Endothelial cell of umbilical vein (primary cell): ENCODE measurements at regions of chr12 and their contacts with region 1.

Region 1: GRCh38 chr12:62372137-62372536 is 94.5 kb upstream of the MON2 start:
- DNase-seq: no peak
- H3K4me3 ChIP-seq: no peak overlapping the region
- H3K27ac ChIP-seq: no peak overlapping the region
- H3K4me1 ChIP-seq: peaks cover 8% of the 10 kb centered on the region
- H3K27me3 ChIP-seq: no peaks in the 10 kb centered on the region
- CTCF ChIP-seq: no peak
- POLR2A ChIP-seq: no peak

Region 2: GRCh38 chr12:62259993-62260732 is 112.0 kb before region 1 on chr12 and contains the start of gene USP15:
- CTCF ChIA-PET with region 1: no interaction called
- POLR2A ChIA-PET with region 1: no interaction called
- dilution Hi-C with region 1: no loop called
- intact Hi-C with region 1: loop called (anchors 5 kb)
- DNase-seq: peak; percentile 97
- H3K4me3 ChIP-seq: peak within 1 kb of the TSS; percentile 65 to 97 (median 93)
- H3K27ac ChIP-seq: peak within 1 kb of the TSS; percentile 71
- H3K4me1 ChIP-seq: peaks cover 19% of the 10 kb centered on the region
- H3K27me3 ChIP-seq: no peaks in the 10 kb centered on the region
- CTCF ChIP-seq: peak; percentile 84 to 96
- POLR2A ChIP-seq: peak; percentile 78
- total RNA-seq, gene USP15: 61.8 and 66.2 TPM in 2 replicates

Region 3: DNA sequence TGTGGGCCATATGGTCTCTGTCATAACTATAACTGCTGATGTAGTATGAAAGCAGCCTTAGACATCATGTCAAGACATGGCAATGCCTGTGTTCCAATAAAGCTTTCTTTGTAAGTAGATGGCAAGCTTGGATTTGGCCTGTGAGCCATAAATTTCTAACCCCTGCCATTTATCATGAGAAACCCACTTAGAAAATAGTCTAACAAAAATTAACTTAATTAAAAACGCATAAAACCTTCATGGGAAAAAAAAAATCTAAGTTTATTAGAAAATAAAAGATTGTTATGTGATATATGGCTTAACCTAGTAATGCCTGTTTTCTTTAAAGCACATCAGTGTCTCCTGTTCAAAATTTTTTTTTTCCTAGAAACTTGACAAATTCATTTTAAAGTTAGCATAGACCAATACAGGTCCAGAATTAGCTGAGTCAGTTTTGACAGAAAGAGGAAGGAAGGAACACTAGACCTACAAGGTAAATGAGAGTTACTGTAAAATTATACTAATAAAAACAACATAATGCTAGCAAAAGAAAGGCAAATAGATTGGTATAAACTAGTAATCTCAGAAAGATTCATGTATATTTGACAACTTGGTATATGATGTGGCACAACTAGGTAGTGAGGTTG is 43.7 kb before region 1 on chr12:
- CTCF ChIA-PET with region 1: no interaction called
- POLR2A ChIA-PET with region 1: no interaction called
- dilution Hi-C with region 1: no loop called
- intact Hi-C with region 1: no loop called
- DNase-seq: no peak
- H3K4me3 ChIP-seq: no peak overlapping the region
- H3K27ac ChIP-seq: no peak overlapping the region
- H3K4me1 ChIP-seq: no peaks in the 10 kb centered on the region
- H3K27me3 ChIP-seq: no peaks in the 10 kb centered on the region
- CTCF ChIP-seq: no peak
- POLR2A ChIP-seq: no peak

Region 4: GRCh38 chr12:62345667-62346066 is 26.5 kb before region 1 on chr12:
- CTCF ChIA-PET with region 1: no interaction called
- POLR2A ChIA-PET with region 1: no interaction called
- dilution Hi-C with region 1: no loop called
- intact Hi-C with region 1: no loop called
- DNase-seq: no peak
- H3K4me3 ChIP-seq: no peak overlapping the region
- H3K27ac ChIP-seq: no peak overlapping the region
- H3K4me1 ChIP-seq: no peaks in the 10 kb centered on the region
- H3K27me3 ChIP-seq: no peaks in the 10 kb centered on the region
- CTCF ChIP-seq: no peak
- POLR2A ChIP-seq: no peak

Region 5: GRCh38 chr12:62407587-62407986 is 35.5 kb after region 1 on chr12:
- CTCF ChIA-PET with region 1: no interaction called
- POLR2A ChIA-PET with region 1: no interaction called
- dilution Hi-C with region 1: no loop called
- intact Hi-C with region 1: loop called (anchors 2 kb)
- DNase-seq: no peak
- H3K4me3 ChIP-seq: no peak overlapping the region
- H3K27ac ChIP-seq: no peak overlapping the region
- H3K4me1 ChIP-seq: no peaks in the 10 kb centered on the region
- H3K27me3 ChIP-seq: no peaks in the 10 kb centered on the region
- CTCF ChIP-seq: no peak
- POLR2A ChIP-seq: no peak